RWPE1 (cell line): ENCODE measurements at regions of chr10 and their contacts with region 1.

Region 1: DNA sequence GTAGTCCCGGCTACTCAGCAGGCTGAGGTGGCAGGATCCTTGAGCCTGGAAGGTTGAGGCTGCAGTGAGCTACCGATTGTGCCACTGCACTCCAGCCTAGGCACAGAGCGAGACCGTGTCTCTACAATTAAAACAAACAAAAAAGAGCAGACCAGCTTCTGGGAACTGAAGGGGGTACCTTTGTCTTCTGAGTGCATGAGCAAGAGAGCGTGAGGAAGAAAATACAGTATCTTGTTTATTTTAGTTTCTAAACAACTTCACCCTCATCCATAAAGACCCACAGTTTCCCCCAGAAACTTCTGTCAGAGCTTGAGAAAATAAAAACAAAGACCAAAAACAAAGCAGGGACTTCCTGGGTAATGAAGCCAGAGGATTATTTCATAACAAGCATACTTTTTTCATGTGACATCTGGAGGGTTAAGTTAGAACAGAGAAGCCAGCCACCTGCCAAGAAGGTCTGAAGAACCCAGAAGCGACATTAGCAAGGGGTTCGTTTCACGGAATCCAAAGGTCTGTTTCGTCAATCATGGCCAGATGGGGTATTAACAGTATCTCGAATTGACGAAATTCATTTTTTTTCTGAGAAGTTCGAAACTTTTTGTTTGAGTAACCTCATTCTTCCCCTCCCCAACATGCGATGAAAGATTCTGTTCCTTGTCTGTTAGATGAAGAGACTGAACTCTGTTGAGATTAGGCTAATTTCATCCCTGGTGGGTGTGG is 10.2 kb upstream of the IL2RA start:
- DNase-seq: no peak
- H3K27ac ChIP-seq: no peak overlapping the region
- CTCF ChIP-seq: no peak

Region 2: GRCh38 chr10:6062101-6062771 is 10.1 kb before region 1 on chr10 and contains the start of gene IL2RA:
- CTCF ChIA-PET with region 1: no interaction called
- POLR2A ChIA-PET with region 1: interaction called, 10 read pairs
- DNase-seq: no peak
- H3K27ac ChIP-seq: no peak within 1 kb of the TSS
- CTCF ChIP-seq: no peak